ENCODE measurements at regions of chr7 and their contacts with region 1.

Region 1: GRCh38 chr7:140175221-140176121 is 1.3 kb downstream of the KDM7A start:
- DNase-seq: peak; percentile 88
- H3K4me3 Mint-ChIP-seq: peak overlapping the region; percentile 83
- H3K27ac Mint-ChIP-seq: peak overlapping the region; percentile 69
- H3K4me1 Mint-ChIP-seq: peaks cover 56% of the 10 kb centered on the region
- H3K27me3 Mint-ChIP-seq: peaks cover 6% of the 10 kb centered on the region

Region 2: GRCh38 chr7:139777948-139778841 is 397.3 kb before region 1 on chr7 and contains the start of gene HIPK2:
- intact Hi-C with region 1: loop called (anchors 5 kb)
- DNase-seq: peak; percentile 65
- H3K4me3 Mint-ChIP-seq: peak within 1 kb of the TSS; percentile 99
- H3K27ac Mint-ChIP-seq: peak within 1 kb of the TSS; percentile 98
- H3K4me1 Mint-ChIP-seq: peaks cover 48% of the 10 kb centered on the region
- H3K27me3 Mint-ChIP-seq: peaks cover 15% of the 10 kb centered on the region
- total RNA-seq, gene HIPK2: 28.3 and 29.2 TPM in 2 replicates

Region 3: DNA sequence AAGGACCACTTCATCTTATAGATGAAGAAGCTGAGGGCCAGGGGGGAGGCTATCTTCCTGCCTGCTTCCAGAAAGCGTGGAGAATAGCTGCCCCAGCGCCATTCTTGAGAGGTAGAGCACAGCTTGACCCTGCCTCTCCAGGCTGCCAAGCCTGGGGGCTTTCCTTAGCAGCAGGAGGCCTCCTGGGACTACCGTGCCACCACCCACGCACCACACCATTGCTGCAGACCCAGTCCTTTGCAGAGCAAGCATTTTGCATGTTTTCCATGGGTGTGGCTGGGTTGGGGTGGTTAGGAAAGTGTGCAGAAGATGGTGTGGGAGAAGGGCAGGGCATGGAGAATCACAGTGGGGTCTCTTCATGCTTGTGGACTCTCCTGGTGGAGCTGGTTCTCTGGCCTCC is 281.5 kb before region 1 on chr7:
- intact Hi-C with region 1: no loop called
- DNase-seq: no peak
- H3K4me3 Mint-ChIP-seq: no peak overlapping the region
- H3K27ac Mint-ChIP-seq: no peak overlapping the region
- H3K4me1 Mint-ChIP-seq: no peaks in the 10 kb centered on the region
- H3K27me3 Mint-ChIP-seq: peaks cover 4% of the 10 kb centered on the region

Region 4: GRCh38 chr7:140160308-140160707 is 15.2 kb before region 1 on chr7:
- intact Hi-C with region 1: loop called (anchors 2 kb)
- DNase-seq: no peak
- H3K4me3 Mint-ChIP-seq: peak overlapping the region; percentile 8
- H3K27ac Mint-ChIP-seq: peak overlapping the region; percentile 62
- H3K4me1 Mint-ChIP-seq: peaks cover 73% of the 10 kb centered on the region
- H3K27me3 Mint-ChIP-seq: no peaks in the 10 kb centered on the region

Region 5: DNA sequence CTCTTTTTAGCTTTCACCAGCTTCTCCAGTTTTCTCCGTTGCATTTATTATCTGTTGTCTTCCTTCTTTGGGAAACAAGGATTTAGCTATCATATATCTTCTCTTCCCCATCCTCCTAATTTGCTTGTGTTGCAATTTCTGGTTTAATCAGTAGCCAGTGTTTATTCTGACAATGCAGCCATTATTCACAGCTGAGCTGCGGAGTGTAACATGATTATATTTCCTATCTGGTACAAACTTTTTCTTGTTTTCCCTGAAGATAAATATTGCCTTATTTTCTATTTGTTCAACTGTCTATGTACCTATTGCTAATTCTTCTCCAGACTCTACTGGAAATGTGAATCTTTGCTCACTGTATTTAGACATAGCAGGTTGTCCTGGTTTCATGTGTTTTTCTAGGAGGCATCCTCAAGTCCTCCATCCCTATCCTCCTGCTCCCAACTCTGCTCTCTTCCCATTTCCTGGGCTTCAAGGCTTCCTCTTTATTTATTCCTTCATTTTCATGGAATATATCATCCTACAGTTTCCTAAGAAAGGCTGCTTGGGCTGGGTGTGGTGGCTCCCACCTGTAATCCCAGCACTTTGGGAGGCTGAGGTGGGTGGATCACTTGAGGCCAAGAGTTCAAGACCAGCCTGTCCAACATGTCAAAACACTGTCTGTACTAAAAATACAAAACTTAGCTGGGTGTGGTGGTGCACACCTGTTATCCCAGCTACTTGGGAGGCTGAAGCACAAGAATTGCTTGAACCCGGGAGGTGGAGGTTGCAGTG is 73.8 kb after region 1 on chr7:
- intact Hi-C with region 1: loop called (anchors 1 kb)
- DNase-seq: no peak
- H3K4me3 Mint-ChIP-seq: no peak overlapping the region
- H3K27ac Mint-ChIP-seq: no peak overlapping the region
- H3K4me1 Mint-ChIP-seq: peaks cover 30% of the 10 kb centered on the region
- H3K27me3 Mint-ChIP-seq: no peaks in the 10 kb centered on the region

Region 6: DNA sequence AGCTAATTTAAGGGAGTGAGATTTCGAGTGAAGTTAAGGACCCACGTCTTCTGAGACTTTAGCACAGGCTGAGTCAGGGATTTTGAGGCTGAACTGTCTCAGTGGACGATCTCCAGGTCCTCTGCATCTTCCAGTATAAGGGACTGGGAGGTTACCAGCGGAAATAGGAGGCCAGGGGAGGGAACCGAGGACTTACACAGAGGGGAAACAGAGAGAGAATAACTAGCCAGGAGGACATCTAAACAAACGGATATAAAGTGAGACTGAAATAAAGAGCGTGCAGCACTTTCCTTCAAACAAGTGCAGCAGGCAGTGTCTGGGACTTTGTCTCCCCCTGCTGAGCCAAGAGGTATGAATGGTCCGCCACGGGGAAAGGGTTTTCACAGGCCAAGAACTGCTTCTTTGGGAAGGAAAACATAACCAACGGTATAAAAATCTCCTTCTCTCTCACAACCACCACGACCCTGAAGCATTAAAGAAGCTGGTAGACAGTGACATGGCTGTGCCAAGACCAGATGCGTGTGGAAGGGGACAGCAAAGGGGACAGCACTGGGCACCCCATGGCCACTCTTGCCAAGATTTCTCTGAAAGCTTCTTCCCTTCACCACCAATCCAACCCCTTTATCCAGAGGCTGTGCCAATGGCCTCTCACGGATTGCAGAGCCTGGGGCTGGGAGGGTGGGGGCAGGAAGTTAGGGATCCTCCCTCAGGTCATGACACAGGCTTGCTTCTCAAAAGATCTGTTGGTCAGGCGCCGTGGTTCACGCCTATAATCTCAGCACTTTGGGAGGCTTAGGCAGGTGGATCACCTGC is 150.9 kb after region 1 on chr7:
- intact Hi-C with region 1: loop called (anchors 1 kb)
- DNase-seq: peak; percentile 36
- H3K4me3 Mint-ChIP-seq: no peak overlapping the region
- H3K27ac Mint-ChIP-seq: no peak overlapping the region
- H3K4me1 Mint-ChIP-seq: no peaks in the 10 kb centered on the region
- H3K27me3 Mint-ChIP-seq: no peaks in the 10 kb centered on the region

Region 7: GRCh38 chr7:140439359-140439758 is 263.9 kb after region 1 on chr7:
- intact Hi-C with region 1: loop called (anchors 1 kb)
- DNase-seq: no peak
- H3K4me3 Mint-ChIP-seq: no peak overlapping the region
- H3K27ac Mint-ChIP-seq: peak overlapping the region; percentile 58
- H3K4me1 Mint-ChIP-seq: peaks cover 13% of the 10 kb centered on the region
- H3K27me3 Mint-ChIP-seq: peaks cover 4% of the 10 kb centered on the region

Region 8: GRCh38 chr7:140562926-140563481 is 387.5 kb after region 1 on chr7:
- intact Hi-C with region 1: no loop called
- DNase-seq: no peak
- H3K4me3 Mint-ChIP-seq: no peak overlapping the region
- H3K27ac Mint-ChIP-seq: no peak overlapping the region
- H3K4me1 Mint-ChIP-seq: no peaks in the 10 kb centered on the region
- H3K27me3 Mint-ChIP-seq: peaks cover 14% of the 10 kb centered on the region

Measured in activated T-helper 1 cell treated with anti-CD3 and anti-CD28 coated beads, Interleukin-12 subunit alpha, Interleukin-12 subunit beta, Interleukin-2, Interleukin-4 antibody, amounts not matched to agents 30 ng/mL and 10 ng/mL and 1 ng/mL, durations not matched to agents 14 hours and 24 hours and 36 hours (primary cell).